ENCODE measurements at regions of chr4 and their contacts with region 1.

Region 1: GRCh38 chr4:154551872-154552686 is 1.9 kb upstream of the PLRG1 start:
- DNase-seq: peak; percentile 48 to 86 (median 60)
- ATAC-seq: peak; percentile 41
- H3K4me3 ChIP-seq: no peak overlapping the region
- H3K4me3 Mint-ChIP-seq: peak overlapping the region; percentile 63
- H3K27ac ChIP-seq: no peak overlapping the region
- H3K27ac Mint-ChIP-seq: peak overlapping the region; percentile 63
- H3K4me1 ChIP-seq: peaks cover 15% of the 10 kb centered on the region
- H3K4me1 Mint-ChIP-seq: peaks cover 31% of the 10 kb centered on the region
- H3K27me3 ChIP-seq: no peaks in the 10 kb centered on the region
- H3K27me3 Mint-ChIP-seq: no peaks in the 10 kb centered on the region
- CTCF ChIP-seq: peak; percentile 93

Region 2: GRCh38 chr4:154618708-154619315 is 66.7 kb after region 1 on chr4:
- CTCF ChIA-PET with region 1: interaction called, 7 read pairs
- POLR2A ChIA-PET with region 1: interaction called, 4 read pairs
- intact Hi-C with region 1: loop called (anchors 1 to 2 kb)
- DNase-seq: peak in 13 of 14 experiments; percentile 3 to 63 (median 31)
- ATAC-seq: peak; percentile 65
- H3K4me3 ChIP-seq: no peak overlapping the region
- H3K4me3 Mint-ChIP-seq: no peak overlapping the region
- H3K27ac ChIP-seq: no peak overlapping the region
- H3K27ac Mint-ChIP-seq: no peak overlapping the region
- H3K4me1 ChIP-seq: no peaks in the 10 kb centered on the region
- H3K4me1 Mint-ChIP-seq: no peaks in the 10 kb centered on the region
- H3K27me3 ChIP-seq: peaks cover 0 to 15% of the 10 kb centered on the region in 2 experiments
- H3K27me3 Mint-ChIP-seq: peaks cover 14% of the 10 kb centered on the region
- CTCF ChIP-seq: peak; percentile 39

Region 3: DNA sequence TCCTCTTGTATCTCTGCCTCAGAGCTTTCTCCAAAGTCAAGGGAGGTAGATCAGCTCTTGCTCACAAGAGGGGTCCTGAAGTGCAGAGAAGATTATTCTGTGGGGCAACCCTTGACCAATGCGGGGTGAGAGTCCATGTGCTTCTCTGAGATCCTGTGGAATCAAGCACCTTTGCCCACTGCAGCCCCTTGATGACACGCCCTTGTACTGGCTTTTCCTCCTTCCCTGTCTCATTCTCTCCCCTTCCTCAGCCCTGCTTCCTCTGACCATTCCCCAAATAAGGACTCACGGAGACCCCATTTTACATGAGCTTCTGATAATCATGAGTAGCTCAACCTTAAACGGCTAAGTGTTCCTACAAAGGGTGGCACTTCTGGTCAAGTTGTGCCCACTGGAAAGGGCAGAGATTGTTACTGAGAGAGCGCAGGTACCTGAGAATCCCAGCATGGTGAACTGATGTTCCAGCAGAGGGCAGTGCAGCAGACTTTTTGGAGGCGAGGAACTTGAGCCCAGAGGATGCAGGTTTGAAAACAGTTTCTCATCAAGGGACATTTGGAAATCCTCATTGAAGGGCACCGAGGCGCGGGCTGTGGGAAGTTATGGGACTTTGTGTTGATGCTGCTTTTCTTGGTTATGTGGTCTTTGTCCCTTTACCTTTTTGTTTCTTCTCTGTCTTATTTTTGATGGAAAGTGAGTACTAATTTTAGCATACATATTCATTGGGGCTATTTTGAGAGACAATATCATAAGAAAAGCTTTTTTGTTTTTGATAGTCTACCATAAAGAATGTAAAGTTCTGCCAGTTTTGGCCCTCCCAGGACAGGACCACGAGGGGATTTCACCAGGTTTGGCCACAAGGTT is 430.3 kb after region 1 on chr4:
- CTCF ChIA-PET with region 1: no interaction called
- POLR2A ChIA-PET with region 1: no interaction called
- intact Hi-C with region 1: loop called in 1 of 2 experiments (anchors 5 kb)
- DNase-seq: peak in 9 of 14 experiments; percentile 1 to 40 (median 5)
- ATAC-seq: no peak
- H3K4me3 ChIP-seq: no peak overlapping the region
- H3K4me3 Mint-ChIP-seq: no peak overlapping the region
- H3K27ac ChIP-seq: no peak overlapping the region
- H3K27ac Mint-ChIP-seq: no peak overlapping the region
- H3K4me1 ChIP-seq: no peaks in the 10 kb centered on the region
- H3K4me1 Mint-ChIP-seq: no peaks in the 10 kb centered on the region
- H3K27me3 ChIP-seq: no peaks in the 10 kb centered on the region
- H3K27me3 Mint-ChIP-seq: no peaks in the 10 kb centered on the region
- CTCF ChIP-seq: peak; percentile 27

Region 4: DNA sequence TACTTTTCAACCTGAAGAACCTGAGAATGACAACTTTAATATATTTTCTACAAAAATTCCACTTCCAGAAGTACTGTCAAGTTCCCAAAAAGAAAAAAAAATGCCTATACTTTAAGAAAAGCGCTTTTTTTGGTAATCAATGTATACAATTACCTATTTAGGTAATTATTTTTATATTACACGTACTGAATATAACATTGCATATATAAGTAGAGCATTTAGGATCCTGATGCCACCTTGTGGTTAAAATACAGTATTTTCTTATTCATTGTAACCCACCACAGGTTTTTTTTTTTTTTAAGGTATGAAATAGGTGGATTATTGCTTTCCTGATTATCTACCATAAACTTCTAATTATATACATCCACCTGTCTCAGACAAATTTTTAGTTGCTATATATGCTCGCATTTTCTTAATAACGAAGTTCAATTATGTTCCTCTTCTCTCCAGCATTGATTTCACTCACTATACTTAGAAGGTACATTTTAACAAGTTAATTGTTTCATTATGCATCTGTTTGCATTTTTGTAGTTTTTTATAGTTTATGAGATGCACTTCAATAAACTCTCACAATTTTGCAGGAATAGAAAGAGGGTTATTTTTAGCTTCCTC is 819.5 kb after region 1 on chr4:
- CTCF ChIA-PET with region 1: interaction called, 5 read pairs
- POLR2A ChIA-PET with region 1: interaction called, 10 read pairs
- intact Hi-C with region 1: loop called (anchors 1 to 2 kb)
- DNase-seq: peak in 3 of 14 experiments; percentile 49 to 51 (median 51)
- ATAC-seq: peak; percentile 42
- H3K4me3 ChIP-seq: no peak overlapping the region
- H3K4me3 Mint-ChIP-seq: peak overlapping the region; percentile 20
- H3K27ac ChIP-seq: no peak overlapping the region
- H3K27ac Mint-ChIP-seq: no peak overlapping the region
- H3K4me1 ChIP-seq: no peaks in the 10 kb centered on the region
- H3K4me1 Mint-ChIP-seq: peaks cover 15% of the 10 kb centered on the region
- H3K27me3 ChIP-seq: no peaks in the 10 kb centered on the region
- H3K27me3 Mint-ChIP-seq: no peaks in the 10 kb centered on the region
- CTCF ChIP-seq: peak; percentile 70

Region 5: DNA sequence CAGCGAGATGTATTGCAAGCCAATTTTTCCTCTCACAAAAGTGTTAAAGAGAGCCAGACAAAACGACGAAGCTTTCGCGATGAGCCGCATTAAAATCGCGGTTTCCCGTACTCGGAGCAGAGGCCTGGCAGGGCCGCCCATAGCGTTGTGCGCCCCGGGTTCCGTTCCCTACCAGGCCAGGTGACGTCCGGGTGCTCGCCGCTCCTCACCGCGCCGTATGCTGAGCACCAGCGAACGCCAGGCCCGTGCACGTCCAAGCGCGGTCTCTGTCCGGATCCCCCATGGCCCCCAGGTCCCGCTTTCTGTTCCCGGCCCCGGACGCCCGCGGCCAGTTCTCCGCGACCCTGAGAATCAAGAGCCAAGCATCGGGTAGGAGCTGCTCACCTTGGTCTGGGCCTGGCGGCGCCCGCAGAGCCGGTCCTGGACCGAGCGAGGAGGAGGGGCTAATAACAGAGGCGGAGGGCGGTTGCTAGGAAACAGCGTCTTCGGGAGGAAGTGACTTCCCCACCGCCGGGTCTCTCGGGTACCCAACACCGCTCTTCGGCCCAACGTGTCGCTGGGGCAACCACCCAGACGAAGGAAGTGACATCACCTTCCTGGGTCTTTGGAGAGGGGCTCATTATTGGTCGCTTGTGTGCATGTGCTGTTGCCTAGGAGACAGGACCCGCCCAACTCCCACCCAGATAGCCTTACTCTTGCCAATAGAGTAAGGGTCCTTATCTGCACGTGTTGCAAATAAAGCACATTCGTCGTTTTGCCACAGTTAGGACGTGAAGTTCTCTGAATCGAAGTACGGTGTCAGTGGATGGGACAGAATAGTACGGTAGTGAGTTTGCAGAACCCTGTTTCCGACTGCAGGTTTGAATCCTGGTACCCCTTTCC is 824.5 kb after region 1 on chr4 and contains the start of gene MAP9:
- CTCF ChIA-PET with region 1: interaction called, 5 read pairs
- POLR2A ChIA-PET with region 1: interaction called, 10 read pairs
- intact Hi-C with region 1: loop called (anchors 1 to 2 kb)
- DNase-seq: peak; percentile 76 to 98 (median 83)
- ATAC-seq: peak; percentile 88
- H3K4me3 ChIP-seq: peak within 1 kb of the TSS; percentile 70
- H3K4me3 Mint-ChIP-seq: peak within 1 kb of the TSS; percentile 86
- H3K27ac ChIP-seq: peak within 1 kb of the TSS; percentile 62 to 82
- H3K27ac Mint-ChIP-seq: peak within 1 kb of the TSS; percentile 88
- H3K4me1 ChIP-seq: no peaks in the 10 kb centered on the region
- H3K4me1 Mint-ChIP-seq: peaks cover 22% of the 10 kb centered on the region
- H3K27me3 ChIP-seq: no peaks in the 10 kb centered on the region
- H3K27me3 Mint-ChIP-seq: no peaks in the 10 kb centered on the region
- CTCF ChIP-seq: no peak
- total RNA-seq, gene MAP9: 15.5 to 16.5 TPM

Region 6: GRCh38 chr4:155787113-155787710 is 1235.1 kb after region 1 on chr4:
- CTCF ChIA-PET with region 1: no interaction called
- POLR2A ChIA-PET with region 1: no interaction called
- intact Hi-C with region 1: loop called in 1 of 2 experiments (anchors 10 kb)
- DNase-seq: peak in 3 of 14 experiments; percentile 31 to 53 (median 39)
- ATAC-seq: peak; percentile 48
- H3K4me3 ChIP-seq: no peak overlapping the region
- H3K4me3 Mint-ChIP-seq: no peak overlapping the region
- H3K27ac ChIP-seq: no peak overlapping the region
- H3K27ac Mint-ChIP-seq: no peak overlapping the region
- H3K4me1 ChIP-seq: no peaks in the 10 kb centered on the region
- H3K4me1 Mint-ChIP-seq: peaks cover 6% of the 10 kb centered on the region
- H3K27me3 ChIP-seq: no peaks in the 10 kb centered on the region
- H3K27me3 Mint-ChIP-seq: no peaks in the 10 kb centered on the region
- CTCF ChIP-seq: no peak

Region 7: DNA sequence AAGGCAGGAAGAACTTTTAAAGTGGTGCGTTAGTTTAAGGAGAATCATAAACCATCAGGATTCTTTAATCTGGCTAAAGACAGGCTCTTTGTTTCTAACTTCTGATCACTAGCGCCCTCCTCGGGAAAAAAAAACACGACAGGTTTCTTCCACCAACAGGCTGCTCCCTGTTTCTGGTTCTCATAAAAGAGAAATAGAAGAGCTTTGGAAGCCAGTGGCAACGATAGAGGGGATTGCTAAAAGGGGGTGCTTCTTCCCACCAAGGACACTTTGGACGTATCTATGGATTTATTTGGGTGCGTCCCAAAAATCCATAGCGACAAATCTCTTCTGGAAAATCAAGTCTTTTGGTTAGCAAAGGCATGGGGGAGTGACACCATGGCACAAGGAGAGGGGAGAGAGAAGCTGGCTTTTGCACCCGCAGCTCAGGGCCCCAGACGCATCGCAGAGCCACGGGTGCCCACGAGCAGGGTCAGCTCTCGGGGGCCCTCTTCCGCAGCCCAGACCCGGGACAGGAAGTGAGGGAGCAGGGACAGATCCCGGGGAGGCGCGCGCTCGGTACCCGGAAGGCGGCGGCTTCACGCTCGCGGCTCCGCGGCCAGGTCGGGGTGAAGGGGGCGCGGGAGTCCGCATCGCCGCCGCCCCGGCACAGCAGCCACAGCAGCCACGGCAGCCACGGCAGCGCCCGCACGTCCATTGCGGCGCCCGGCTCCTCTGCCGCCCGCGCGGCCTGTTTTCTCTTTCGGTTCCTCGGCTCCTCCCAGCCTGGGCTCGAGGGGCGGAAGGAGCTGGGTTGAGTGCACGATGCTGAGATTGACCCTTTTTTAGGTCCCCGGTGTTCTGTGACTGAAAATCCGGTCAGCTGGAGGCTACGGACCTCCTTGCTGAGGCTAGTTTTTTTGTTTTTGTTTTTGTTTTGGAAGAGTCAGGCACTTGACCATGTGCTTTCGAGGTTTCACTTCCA is 1401.4 kb after region 1 on chr4 and contains the start of gene CTSO:
- CTCF ChIA-PET with region 1: no interaction called
- POLR2A ChIA-PET with region 1: interaction called, 10 read pairs
- intact Hi-C with region 1: loop called (anchors 2 to 5 kb)
- DNase-seq: peak; percentile 43 to 84 (median 60)
- ATAC-seq: peak; percentile 87
- H3K4me3 ChIP-seq: peak within 1 kb of the TSS; percentile 83
- H3K4me3 Mint-ChIP-seq: peak within 1 kb of the TSS; percentile 97
- H3K27ac ChIP-seq: peak within 1 kb of the TSS; percentile 79 to 90
- H3K27ac Mint-ChIP-seq: peak within 1 kb of the TSS; percentile 96
- H3K4me1 ChIP-seq: peaks cover 9% of the 10 kb centered on the region
- H3K4me1 Mint-ChIP-seq: peaks cover 38% of the 10 kb centered on the region
- H3K27me3 ChIP-seq: no peaks in the 10 kb centered on the region
- H3K27me3 Mint-ChIP-seq: peaks cover 9% of the 10 kb centered on the region
- CTCF ChIP-seq: peak; percentile 82
- total RNA-seq, gene CTSO: 3.7 to 3.8 TPM